ENCODE measurements at regions of chr1 and their contacts with region 1.

Region 1: DNA sequence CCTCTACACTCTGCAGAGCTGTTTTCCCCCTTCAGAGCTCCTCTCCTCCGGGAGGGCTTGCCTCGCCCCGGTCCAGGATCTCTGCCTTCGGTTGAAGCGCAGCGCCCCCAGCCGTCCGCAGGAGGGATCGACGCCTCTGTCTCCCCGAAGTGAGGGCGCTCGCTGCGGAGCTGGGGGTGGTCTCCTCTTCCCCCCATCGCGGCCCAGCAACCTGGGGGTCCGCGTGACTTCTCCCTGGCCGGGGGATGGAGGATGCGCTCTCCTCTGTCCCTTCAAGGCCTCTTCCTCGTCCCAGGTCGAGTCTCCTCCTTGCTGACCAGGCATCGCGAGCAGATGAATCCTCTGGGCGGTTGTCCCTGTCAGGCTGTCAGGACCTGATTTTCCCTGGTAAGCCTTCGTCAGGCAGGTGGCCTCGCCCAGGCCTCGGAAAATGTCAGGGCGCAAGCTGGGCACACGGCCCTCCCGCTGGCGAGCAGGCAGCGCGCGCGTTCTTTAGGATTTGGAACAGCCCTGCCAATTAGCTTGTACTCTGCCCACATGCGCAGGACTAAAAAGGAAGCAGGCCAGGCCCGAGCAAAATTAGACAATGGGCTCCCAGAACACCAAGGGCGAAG is 90.5 kb downstream of the EDEM3 start:
- DNase-seq: no peak
- H3K4me3 ChIP-seq: peak overlapping the region; percentile 54
- CTCF ChIP-seq: peak; percentile 99

Region 2: GRCh38 chr1:184075055-184076029 is 588.8 kb before region 1 on chr1:
- CTCF ChIA-PET with region 1: interaction called, 20 read pairs
- POLR2A ChIA-PET with region 1: no interaction called
- DNase-seq: no peak
- H3K4me3 ChIP-seq: no peak overlapping the region
- CTCF ChIP-seq: peak; percentile 45

Region 3: GRCh38 chr1:184242507-184242943 is 421.6 kb before region 1 on chr1:
- CTCF ChIA-PET with region 1: interaction called, 12 read pairs
- POLR2A ChIA-PET with region 1: no interaction called
- DNase-seq: peak; percentile 29
- H3K4me3 ChIP-seq: no peak overlapping the region
- CTCF ChIP-seq: no peak

Region 4: GRCh38 chr1:184520336-184520735 is 143.8 kb before region 1 on chr1:
- CTCF ChIA-PET with region 1: interaction called, 10 read pairs
- POLR2A ChIA-PET with region 1: no interaction called
- DNase-seq: no peak
- H3K4me3 ChIP-seq: no peak overlapping the region
- CTCF ChIP-seq: no peak

Region 5: GRCh38 chr1:184595591-184595990 is 68.6 kb before region 1 on chr1:
- CTCF ChIA-PET with region 1: interaction called, 11 read pairs
- POLR2A ChIA-PET with region 1: no interaction called
- DNase-seq: peak; percentile 29
- H3K4me3 ChIP-seq: no peak overlapping the region
- CTCF ChIP-seq: no peak

Region 6: DNA sequence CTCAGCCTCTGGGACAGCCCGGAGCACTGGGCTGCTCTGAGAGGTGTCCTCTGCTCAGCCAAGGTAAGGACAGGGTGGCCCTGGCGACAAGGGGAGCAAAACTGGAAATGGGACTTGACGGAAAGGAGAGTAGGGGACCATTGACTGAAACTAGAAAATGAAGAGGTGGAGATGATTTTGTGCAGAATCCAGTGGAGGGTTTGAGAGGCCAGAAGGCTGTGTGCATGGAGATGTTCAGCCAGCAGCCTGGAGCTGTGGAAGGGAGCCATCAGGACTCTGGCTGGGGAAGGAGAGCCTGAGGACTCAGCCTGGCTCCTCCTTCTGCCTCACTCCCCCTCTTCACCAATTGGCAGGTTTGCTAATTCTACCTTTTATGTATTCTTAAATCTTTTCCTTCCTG is 23.6 kb before region 1 on chr1:
- CTCF ChIA-PET with region 1: interaction called, 18 read pairs
- POLR2A ChIA-PET with region 1: no interaction called
- DNase-seq: no peak
- H3K4me3 ChIP-seq: no peak overlapping the region
- CTCF ChIP-seq: no peak

Region 7: DNA sequence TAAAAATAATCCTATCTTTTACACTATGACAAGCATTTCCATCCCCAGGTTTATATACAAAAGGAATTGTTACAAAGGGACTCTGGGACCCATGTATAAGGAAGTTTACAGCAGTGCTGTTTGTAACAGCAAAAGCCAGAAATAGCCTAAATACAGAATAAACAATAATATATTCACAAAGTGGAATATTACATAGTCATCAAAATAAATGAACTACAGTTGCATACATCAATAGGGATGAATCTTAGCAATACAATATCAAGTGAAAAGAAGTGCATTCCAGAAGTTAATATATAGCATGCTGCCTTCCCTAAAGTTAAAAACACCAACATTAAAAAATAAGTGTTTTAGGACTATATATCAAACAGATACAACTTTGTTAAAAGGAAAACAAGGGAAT is 13.2 kb after region 1 on chr1:
- CTCF ChIA-PET with region 1: interaction called, 42 read pairs
- POLR2A ChIA-PET with region 1: no interaction called
- DNase-seq: no peak
- H3K4me3 ChIP-seq: no peak overlapping the region
- CTCF ChIP-seq: no peak